Activated CD4-positive, alpha-beta T cell treated with anti-CD3 and anti-CD28 coated beads for 36 hours (primary cell): ENCODE measurements at regions of chr5 and their contacts with region 1.

Region 1: DNA sequence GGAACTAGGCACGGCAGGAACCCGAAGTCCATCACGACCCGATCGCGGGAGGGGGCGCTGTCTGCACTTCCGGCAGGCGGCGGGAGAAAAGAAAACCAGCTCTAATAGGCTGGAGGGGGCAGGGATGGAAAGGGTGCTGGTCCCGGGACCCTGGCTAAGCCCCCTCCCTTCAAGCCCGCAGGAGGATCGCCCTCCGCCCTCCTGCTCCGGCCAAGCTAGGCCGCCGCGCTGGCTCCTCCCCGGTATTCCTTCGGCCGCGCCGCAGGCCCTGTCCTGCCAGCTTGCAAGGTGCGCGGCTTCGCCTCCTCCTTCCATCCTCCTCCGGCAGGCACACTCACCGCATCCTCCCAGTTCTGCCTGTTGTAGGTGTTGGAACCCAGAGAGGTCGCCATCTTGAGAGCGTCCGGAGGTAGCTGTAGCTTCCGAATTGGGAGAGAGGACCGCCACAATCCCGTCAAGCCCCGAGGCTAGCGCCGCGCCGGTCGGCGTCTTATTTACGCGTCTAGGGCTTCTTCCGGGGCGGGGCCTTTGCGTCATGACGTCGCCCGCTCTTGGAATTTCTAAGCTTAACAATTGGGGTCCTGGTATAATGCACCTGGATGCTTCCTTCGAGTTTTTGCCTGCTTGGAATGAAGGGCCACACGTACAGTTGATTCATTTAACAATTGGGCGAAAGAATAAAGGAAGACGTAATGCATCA is at the start of gene RBM22:
- DNase-seq: peak; percentile 95
- ATAC-seq: peak; percentile 95
- H3K4me3 Mint-ChIP-seq: no peak within 1 kb of the TSS
- H3K27ac Mint-ChIP-seq: no peak within 1 kb of the TSS
- H3K4me1 Mint-ChIP-seq: peaks cover 15% of the 10 kb centered on the region
- H3K27me3 Mint-ChIP-seq: no peaks in the 10 kb centered on the region
- total RNA-seq, gene RBM22: 59.9 to 61.8 TPM

Region 2: DNA sequence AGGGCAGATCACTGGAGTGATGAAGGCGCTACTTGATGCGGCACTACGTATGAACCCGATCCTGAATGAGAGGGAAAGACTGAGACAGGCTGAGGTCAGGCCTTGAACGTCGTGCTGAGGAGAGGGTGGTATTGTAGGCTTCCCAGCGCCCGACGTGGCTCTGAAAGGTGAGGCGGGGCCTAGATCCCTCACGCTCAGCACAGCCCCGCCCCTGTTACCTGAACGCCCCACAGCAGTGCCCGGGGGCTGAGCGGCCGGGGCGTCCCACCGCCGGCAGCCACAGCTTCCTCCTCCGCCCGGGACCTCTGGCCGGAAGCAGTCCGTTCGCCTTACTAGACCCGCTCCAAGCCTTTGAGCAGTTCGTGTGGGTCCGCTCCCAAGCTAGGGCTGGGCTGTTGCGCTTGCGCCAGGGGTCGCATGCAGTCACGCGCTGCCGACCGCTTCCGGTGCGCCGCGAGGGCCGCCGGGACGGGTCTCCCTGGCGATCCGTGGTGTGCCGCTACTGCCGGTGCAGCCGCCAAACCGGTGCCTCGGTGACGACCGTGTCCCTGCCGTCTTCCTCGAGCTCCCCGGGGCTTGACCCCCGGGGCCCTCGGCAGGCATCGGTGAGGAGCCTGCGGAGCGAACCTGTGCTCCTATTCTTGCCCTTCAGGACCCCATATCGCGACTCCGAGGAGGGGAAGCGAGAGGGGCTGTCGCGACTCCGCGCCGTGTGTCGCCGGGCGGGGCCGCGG is 700.3 kb before region 1 on chr5 and contains the starts of genes HMGXB3 and TIGD6:
- CTCF ChIA-PET with region 1: no interaction called
- POLR2A ChIA-PET with region 1: no interaction called
- intact Hi-C with region 1: loop called in 1 of 2 experiments (anchors 1 kb)
- DNase-seq: peak; percentile 93
- ATAC-seq: peak; percentile 80
- H3K4me3 Mint-ChIP-seq: peak within 1 kb of the TSS; percentile 86
- H3K27ac Mint-ChIP-seq: peak within 1 kb of the TSS; percentile 94
- H3K4me1 Mint-ChIP-seq: peaks cover 37% of the 10 kb centered on the region
- H3K27me3 Mint-ChIP-seq: no peaks in the 10 kb centered on the region
- total RNA-seq, gene HMGXB3: 27.2 to 30.5 TPM
- total RNA-seq, gene TIGD6: 2.5 to 2.6 TPM

Region 3: DNA sequence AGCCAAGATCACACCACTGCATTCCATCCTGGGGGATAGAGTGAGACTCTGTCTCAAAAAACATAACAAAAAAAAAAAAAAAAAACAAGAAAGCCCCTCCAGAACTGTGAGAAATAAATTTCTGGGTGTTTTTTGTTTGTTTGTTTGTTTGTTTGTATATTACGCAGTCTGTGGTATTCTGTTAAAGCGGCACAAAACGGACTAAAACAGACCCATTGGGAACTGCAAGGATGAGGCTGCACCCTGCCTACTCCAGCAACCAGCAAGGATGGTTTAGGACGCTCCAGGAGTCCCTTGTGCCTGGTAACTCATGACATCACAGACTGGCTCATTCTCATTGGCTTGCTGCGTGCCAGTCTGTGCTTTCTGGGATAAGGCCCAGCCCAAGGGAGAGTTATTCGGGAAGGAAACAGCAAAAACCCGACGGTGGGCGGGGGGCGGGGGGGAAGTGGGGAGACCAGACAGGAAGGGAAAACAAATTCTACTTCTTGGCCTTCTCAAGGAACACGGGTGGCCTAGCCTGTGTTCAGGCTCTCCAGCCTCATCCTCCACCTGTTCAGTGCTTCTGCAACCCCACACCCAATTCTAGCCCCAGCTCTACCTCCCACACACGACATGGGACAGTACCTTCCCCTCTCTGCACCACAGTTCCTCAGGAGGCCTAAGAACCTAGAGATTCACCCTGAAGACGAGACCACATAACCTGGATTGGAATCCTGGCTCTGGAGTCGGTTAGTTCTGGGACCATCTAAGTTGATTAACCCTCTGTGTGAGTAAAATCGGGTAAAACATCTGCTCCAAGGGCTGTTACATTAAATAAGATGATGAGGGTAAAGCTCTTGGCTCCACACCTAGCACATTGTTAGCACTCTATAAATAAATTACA is 290.9 kb before region 1 on chr5:
- CTCF ChIA-PET with region 1: no interaction called
- POLR2A ChIA-PET with region 1: no interaction called
- intact Hi-C with region 1: loop called in 1 of 2 experiments (anchors 2 kb)
- DNase-seq: peak; percentile 66
- ATAC-seq: peak; percentile 40
- H3K4me3 Mint-ChIP-seq: peak overlapping the region; percentile 99
- H3K27ac Mint-ChIP-seq: peak overlapping the region; percentile 99
- H3K4me1 Mint-ChIP-seq: peaks cover 36% of the 10 kb centered on the region
- H3K27me3 Mint-ChIP-seq: no peaks in the 10 kb centered on the region

Region 4: DNA sequence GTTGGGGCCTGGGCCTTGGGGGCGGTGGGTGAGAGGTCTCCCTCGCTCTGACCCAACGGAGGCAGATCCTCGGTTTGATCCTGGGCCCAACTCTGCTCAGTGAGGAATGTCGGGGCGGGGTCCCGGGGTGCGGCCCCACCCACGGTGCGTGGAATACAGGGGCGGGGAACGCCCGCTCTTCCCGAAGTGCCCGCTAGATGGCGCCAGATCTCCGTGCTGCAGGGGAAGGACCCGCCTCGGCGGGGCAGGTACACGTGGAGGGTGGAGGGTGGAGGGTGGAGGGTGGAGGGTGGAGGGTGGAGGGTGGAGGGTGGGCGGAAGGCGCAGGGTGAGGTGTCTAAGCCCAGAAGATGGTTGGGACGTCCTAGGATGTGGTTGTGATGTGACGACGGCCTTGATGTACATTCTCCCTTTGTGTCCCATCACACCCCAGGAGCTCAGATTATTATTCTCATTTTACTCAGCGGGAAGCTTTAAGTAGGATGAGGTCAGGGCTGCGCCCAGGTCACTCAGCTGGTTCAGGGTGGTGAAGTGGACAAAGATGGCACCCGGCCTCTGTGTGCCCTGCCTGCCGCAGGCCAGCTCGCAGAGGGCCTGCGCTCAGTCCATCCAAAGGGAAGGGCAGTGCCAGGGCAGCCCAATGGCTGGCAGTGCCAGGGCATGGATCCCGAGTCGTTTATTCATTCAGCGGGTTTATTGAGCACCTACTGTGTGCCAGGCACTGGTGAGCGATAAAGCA is 241.8 kb before region 1 on chr5:
- CTCF ChIA-PET with region 1: no interaction called
- POLR2A ChIA-PET with region 1: interaction called, 3 read pairs
- intact Hi-C with region 1: loop called in 1 of 2 experiments (anchors 1 kb)
- DNase-seq: peak; percentile 93
- ATAC-seq: peak; percentile 87
- H3K4me3 Mint-ChIP-seq: peak overlapping the region; percentile 49
- H3K27ac Mint-ChIP-seq: peak overlapping the region; percentile 52
- H3K4me1 Mint-ChIP-seq: peaks cover 28% of the 10 kb centered on the region
- H3K27me3 Mint-ChIP-seq: no peaks in the 10 kb centered on the region

Region 5: GRCh38 chr5:150498501-150498900 is 202.2 kb before region 1 on chr5:
- CTCF ChIA-PET with region 1: no interaction called
- POLR2A ChIA-PET with region 1: no interaction called
- intact Hi-C with region 1: no loop called
- DNase-seq: no peak
- ATAC-seq: no peak
- H3K4me3 Mint-ChIP-seq: no peak overlapping the region
- H3K27ac Mint-ChIP-seq: no peak overlapping the region
- H3K4me1 Mint-ChIP-seq: no peaks in the 10 kb centered on the region
- H3K27me3 Mint-ChIP-seq: no peaks in the 10 kb centered on the region

Region 6: GRCh38 chr5:150599917-150600499 is 100.7 kb before region 1 on chr5:
- CTCF ChIA-PET with region 1: no interaction called
- POLR2A ChIA-PET with region 1: no interaction called
- intact Hi-C with region 1: no loop called
- DNase-seq: no peak
- ATAC-seq: no peak
- H3K4me3 Mint-ChIP-seq: no peak overlapping the region
- H3K27ac Mint-ChIP-seq: no peak overlapping the region
- H3K4me1 Mint-ChIP-seq: no peaks in the 10 kb centered on the region
- H3K27me3 Mint-ChIP-seq: no peaks in the 10 kb centered on the region

Region 7: DNA sequence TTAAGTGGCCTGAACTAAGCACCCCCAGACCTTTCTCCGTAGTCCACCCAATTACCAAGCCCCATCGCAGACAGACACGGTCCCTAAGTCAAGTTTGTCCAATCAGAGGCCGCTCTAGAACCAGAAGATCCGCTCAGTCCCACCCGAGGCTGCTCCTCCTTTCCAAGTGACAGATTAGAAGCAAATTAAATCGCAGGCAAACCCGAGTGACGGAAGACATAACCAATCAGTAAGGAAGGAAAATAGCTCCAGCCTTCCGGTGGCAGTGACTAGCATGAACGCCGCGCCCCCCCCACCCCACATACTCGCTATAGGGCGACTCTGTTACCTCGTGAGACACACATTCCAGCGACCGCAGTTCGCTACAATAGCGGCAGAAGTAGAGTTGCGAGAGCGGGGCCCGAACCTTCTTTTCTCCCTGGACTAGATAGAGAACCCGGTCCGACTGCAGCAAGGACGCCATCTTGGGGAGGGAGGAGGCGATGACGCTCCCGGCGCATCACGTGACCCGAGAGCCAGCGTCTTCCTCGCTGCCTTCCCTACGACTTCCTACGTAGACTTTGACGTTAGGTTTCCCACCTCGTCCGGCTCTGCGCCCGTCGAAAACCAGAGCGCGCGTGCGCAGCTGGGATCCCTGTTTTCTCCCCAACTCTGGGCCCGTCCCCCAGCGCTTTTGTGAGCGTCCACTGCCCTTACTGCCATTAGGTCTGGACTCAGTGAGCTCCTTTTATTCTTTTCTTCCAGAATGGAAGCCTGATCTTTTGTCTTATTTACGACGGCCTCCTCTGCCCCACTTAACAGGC is 58.0 kb after region 1 on chr5 and contains the start of gene DCTN4:
- CTCF ChIA-PET with region 1: interaction called, 12 read pairs
- POLR2A ChIA-PET with region 1: interaction called, 7 read pairs
- intact Hi-C with region 1: loop called (anchors 1 kb)
- DNase-seq: peak; percentile 96
- ATAC-seq: peak; percentile 96
- H3K4me3 Mint-ChIP-seq: no peak within 1 kb of the TSS
- H3K27ac Mint-ChIP-seq: no peak within 1 kb of the TSS
- H3K4me1 Mint-ChIP-seq: peaks cover 37% of the 10 kb centered on the region
- H3K27me3 Mint-ChIP-seq: no peaks in the 10 kb centered on the region
- total RNA-seq, gene DCTN4: 31.7 to 49.0 TPM

Region 8: GRCh38 chr5:150846654-150847333 is 146.1 kb after region 1 on chr5:
- CTCF ChIA-PET with region 1: interaction called, 22 read pairs
- POLR2A ChIA-PET with region 1: interaction called, 20 read pairs
- intact Hi-C with region 1: loop called (anchors 1 kb)
- DNase-seq: peak; percentile 82
- ATAC-seq: peak; percentile 94
- H3K4me3 Mint-ChIP-seq: peak overlapping the region; percentile 67
- H3K27ac Mint-ChIP-seq: peak overlapping the region; percentile 93
- H3K4me1 Mint-ChIP-seq: peaks cover 22% of the 10 kb centered on the region
- H3K27me3 Mint-ChIP-seq: no peaks in the 10 kb centered on the region

Region 9: DNA sequence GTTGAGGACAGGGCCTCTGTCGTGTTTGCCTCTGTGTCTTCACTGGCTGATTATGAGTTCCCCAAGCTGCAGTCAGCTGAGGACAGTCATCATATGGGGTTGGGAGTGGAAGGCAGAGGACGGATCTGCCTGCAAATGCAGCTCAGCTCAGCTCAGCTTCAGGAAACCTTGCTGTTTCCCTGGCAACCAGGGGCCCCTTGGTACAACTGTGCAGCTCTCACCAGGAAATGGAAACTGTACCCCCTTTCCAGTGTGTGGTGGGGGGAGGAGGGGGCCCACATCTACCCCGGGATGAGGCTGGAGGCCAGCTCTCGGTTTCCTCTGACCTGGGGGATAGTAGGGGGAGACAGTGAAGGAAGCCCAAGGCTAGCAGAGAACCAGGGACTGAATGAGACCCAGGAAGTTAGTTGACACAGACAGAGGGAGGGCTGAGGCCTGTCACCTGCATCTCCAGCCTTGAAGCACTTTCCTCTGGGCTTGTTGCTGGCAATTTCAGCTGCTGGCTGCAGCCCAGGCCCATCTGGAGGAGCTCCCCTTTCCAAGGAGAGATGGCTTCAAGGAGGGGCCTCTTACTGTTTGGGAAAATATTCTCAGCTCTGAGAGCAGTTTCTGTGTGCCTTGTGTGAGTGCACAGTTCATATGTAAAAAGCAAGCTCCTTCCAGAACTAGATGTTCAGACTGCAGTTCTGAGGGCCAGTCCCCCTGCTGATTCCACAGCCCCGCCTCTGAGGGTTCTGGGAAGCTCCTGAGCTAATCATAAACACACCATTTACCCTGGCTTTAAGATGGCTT is 449.9 kb after region 1 on chr5:
- CTCF ChIA-PET with region 1: no interaction called
- POLR2A ChIA-PET with region 1: no interaction called
- intact Hi-C with region 1: loop called in 1 of 2 experiments (anchors 1 kb)
- DNase-seq: peak; percentile 87
- ATAC-seq: peak; percentile 64
- H3K4me3 Mint-ChIP-seq: peak overlapping the region; percentile 46
- H3K27ac Mint-ChIP-seq: peak overlapping the region; percentile 89
- H3K4me1 Mint-ChIP-seq: peaks cover 94% of the 10 kb centered on the region
- H3K27me3 Mint-ChIP-seq: no peaks in the 10 kb centered on the region